ENCODE measurements at regions of chr1 and their contacts with region 1.

Region 1: DNA sequence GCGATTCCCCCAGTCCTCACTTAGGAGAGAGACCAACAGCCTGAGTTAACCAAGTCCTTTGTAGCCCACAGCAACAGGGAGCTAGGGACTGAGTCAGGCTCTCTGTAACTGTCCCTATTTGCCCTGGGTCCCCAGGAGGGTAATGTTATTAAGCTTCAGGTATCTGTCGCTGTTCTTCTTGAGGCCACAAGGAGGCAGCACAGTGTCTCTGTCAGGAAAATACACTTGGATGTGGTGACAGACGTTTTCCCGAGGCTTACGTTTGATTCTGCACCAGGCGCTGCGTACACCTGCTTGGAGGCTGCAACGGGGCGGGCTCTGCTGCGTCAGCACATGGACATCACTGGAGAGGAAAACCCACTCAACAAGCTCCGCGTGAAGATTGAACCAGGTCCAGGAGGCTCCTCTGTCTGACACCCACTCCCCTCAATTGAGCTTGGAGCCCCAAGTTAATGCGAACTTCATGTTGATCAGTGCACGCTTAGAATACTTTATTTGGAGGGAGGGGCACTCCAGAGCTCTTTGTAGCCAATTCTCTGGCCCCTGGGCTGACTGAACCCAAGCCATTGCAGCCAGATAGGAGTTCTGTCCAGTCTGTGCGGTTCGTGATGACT is 10.7 kb upstream of the ELF3 start:
- DNase-seq: no peak
- H3K4me3 ChIP-seq: no peak overlapping the region
- CTCF ChIP-seq: peak; percentile 73

Region 2: DNA sequence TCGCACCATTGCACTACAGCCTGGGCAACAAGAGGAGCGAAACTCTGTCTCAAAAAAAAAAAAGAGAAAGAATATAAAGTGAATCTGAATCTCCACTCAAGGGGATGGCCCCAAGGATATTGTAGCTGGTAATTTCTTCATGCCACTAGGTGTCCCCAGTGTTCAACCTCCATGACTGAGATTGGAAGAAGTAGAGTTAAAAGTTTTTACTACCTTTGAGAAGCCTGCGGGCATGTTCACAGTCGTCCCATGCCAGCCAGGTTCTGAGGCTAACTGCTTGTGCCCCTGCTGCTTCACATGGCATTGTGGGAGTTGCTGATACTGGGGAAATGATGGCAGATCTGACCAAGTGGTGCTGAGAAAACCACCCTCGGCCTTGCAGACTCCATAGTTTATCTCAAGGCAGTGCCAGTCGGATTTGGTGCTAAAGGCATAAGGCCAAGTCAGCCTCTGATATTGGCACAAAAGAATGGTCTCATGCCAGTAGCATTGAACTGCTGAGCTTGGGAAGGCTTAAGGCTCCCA is 121.8 kb before region 1 on chr1:
- CTCF ChIA-PET with region 1: interaction called, 14 read pairs
- POLR2A ChIA-PET with region 1: no interaction called
- DNase-seq: no peak
- H3K4me3 ChIP-seq: no peak overlapping the region
- CTCF ChIP-seq: peak; percentile 66

Region 3: DNA sequence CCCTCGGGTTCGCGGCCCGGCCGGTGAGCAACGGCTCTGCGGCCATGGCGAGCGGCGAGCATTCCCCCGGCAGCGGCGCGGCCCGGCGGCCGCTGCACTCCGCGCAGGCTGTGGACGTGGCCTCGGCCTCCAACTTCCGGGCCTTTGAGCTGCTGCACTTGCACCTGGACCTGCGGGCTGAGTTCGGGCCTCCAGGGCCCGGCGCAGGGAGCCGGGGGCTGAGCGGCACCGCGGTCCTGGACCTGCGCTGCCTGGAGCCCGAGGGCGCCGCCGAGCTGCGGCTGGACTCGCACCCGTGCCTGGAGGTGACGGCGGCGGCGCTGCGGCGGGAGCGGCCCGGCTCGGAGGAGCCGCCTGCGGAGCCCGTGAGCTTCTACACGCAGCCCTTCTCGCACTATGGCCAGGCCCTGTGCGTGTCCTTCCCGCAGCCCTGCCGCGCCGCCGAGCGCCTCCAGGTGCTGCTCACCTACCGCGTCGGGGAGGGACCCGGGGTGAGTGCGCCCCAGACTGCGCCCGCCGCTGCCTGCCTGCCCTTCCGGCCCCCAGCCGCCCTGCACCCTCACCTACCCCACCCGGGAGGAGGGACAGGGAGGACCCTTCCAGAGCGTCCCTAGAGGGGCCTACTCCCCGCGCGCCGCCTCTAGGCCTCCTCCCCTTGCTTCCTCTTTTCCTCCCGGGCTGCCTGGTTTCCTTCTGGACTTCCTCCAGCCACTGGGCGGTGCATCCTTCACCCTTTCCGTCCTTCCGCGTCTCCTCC is 16.9 kb before region 1 on chr1 and contains the start of gene RNPEP:
- CTCF ChIA-PET with region 1: interaction called, 89 read pairs
- POLR2A ChIA-PET with region 1: no interaction called
- DNase-seq: no peak
- H3K4me3 ChIP-seq: peak within 1 kb of the TSS; percentile 76
- CTCF ChIP-seq: no peak

Region 4: GRCh38 chr1:202105539-202106276 is 106.0 kb after region 1 on chr1:
- CTCF ChIA-PET with region 1: interaction called, 956 read pairs
- POLR2A ChIA-PET with region 1: no interaction called
- DNase-seq: no peak
- H3K4me3 ChIP-seq: no peak overlapping the region
- CTCF ChIP-seq: no peak

Region 5: GRCh38 chr1:202135221-202135721 is 135.5 kb after region 1 on chr1:
- CTCF ChIA-PET with region 1: interaction called, 113 read pairs
- POLR2A ChIA-PET with region 1: no interaction called
- DNase-seq: no peak
- H3K4me3 ChIP-seq: no peak overlapping the region
- CTCF ChIP-seq: peak; percentile 85

Region 6: DNA sequence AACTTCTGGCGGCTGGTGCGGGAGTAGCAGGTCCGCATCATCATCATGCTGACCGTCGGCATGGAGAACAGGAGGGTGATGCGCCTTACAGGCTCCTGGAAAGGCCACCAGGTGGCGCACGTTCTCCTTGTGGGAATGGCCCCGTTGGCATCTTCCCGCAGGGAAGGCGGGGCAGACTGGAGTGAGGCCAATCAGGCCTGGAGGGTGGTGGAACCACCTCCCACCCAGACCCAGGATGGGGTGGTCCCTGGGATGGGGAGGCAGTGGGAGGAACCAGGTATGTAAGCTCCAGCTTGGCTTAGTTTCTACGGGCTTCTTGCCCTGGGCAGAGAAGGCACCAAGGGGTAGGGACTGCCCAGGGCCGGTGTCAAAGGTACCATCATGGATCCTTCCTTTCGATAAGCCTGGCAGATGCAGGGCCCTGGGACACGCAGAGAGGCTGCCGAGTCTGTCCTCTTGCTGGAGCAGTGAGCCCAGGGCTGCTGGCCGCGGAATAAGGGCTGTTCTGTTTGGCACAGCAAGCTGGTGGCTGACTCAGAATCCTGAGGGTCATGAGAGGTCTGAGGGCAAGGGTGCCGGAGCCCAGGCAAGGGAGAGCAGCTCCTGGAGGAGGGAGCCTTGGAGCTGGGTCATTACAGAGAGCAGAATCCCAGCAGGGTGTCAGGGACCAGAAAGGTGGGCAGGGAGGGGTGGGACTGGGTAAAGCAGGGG is 185.2 kb after region 1 on chr1:
- CTCF ChIA-PET with region 1: no interaction called
- POLR2A ChIA-PET with region 1: no interaction called
- DNase-seq: peak; percentile 12
- H3K4me3 ChIP-seq: no peak overlapping the region
- CTCF ChIP-seq: peak; percentile 94

Region 7: DNA sequence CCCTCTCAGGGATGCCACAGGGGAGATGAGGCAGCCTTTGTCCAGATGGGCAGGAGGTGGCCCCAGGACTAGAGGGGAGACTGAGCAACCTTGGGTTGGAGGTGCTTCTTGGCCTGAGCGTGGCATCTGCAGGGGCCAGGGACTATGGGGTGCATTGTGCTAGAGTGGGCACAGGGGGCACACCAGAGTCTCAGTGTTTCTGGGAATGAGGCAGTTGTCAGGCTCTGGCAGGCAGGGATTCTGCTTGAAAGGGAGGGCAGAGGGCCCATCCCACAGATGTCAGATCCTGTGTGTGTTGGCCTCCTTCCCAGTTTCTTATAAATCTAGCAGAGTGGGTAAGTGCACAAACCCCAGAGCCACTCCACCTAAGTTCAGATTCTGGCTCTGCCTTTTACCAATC is 207.6 kb after region 1 on chr1:
- CTCF ChIA-PET with region 1: no interaction called
- POLR2A ChIA-PET with region 1: no interaction called
- DNase-seq: peak; percentile 23
- H3K4me3 ChIP-seq: no peak overlapping the region
- CTCF ChIP-seq: peak; percentile 23